ENCODE measurements at regions of chr1 and their contacts with region 1.

Region 1: DNA sequence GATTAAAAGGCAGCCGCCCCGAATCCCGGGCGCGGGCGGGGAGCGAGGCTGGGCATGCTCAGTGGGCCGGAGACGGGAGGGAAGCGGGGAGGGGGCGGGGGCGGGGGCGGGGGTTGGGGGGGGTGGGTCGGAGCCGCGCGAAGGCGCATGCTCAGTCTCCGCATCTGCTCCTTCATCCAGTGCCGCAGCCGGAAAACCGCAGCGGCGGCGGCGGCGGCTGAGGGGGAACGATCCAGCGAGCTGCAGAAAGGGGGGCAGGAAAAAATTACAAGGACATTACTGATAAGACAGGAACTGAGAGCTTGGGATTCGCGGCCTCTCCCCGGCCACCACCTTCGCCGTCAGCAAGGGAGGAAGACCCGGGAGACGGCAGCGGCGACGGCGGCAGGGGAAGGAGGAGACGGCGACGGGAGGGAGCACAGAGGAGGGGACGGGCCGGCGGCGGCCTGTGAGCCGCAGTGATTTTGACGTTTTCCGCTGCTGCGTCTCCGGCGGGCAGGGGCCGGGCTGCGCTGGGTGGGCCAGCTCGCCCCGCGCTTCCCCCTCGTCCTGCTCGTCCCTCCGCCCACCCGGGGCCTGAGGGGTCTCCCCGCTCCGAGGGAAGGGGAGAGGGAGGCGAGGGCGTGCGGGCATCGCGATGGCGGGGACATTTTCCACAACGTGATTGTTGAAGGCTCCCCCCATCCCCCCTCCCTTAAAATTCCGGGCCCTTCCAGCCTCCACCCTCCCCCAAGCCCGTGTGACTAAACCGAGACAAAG is at the start of gene CAMSAP2:
- DNase-seq: peak; percentile 86
- ATAC-seq: peak; percentile 83
- H3K4me3 ChIP-seq: peak within 1 kb of the TSS; percentile 96
- H3K27ac ChIP-seq: peak within 1 kb of the TSS; percentile 100
- H3K4me1 ChIP-seq: no peaks in the 10 kb centered on the region; the same call in 1 of the 2 replicates
- H3K27me3 ChIP-seq: no peaks in the 10 kb centered on the region
- CTCF ChIP-seq: no peak
- POLR2A ChIP-seq: peak; percentile 79
- RAD21 ChIP-seq: no peak
- total RNA-seq, gene CAMSAP2: 29.4 and 43.0 TPM in 2 replicates

Region 2: GRCh38 chr1:200669314-200670241 is 69.3 kb before region 1 on chr1 and contains the start of gene DDX59:
- CTCF ChIA-PET with region 1: no interaction called
- POLR2A ChIA-PET with region 1: interaction called, 11 read pairs
- dilution Hi-C with region 1: no loop called
- in situ Hi-C with region 1: no loop called
- intact Hi-C with region 1: loop called (anchors 1 kb)
- DNase-seq: peak; percentile 96
- ATAC-seq: peak; percentile 91
- H3K4me3 ChIP-seq: peak within 1 kb of the TSS; percentile 76
- H3K27ac ChIP-seq: peak within 1 kb of the TSS; percentile 87
- H3K4me1 ChIP-seq: peaks cover 3% of the 10 kb centered on the region; the same call in 1 of the 2 replicates
- H3K27me3 ChIP-seq: no peaks in the 10 kb centered on the region
- CTCF ChIP-seq: no peak
- POLR2A ChIP-seq: peak; percentile 97
- RAD21 ChIP-seq: no peak; the same call in 1 of the 2 replicates
- total RNA-seq, gene DDX59: 9.1 and 11.1 TPM in 2 replicates

Region 3: DNA sequence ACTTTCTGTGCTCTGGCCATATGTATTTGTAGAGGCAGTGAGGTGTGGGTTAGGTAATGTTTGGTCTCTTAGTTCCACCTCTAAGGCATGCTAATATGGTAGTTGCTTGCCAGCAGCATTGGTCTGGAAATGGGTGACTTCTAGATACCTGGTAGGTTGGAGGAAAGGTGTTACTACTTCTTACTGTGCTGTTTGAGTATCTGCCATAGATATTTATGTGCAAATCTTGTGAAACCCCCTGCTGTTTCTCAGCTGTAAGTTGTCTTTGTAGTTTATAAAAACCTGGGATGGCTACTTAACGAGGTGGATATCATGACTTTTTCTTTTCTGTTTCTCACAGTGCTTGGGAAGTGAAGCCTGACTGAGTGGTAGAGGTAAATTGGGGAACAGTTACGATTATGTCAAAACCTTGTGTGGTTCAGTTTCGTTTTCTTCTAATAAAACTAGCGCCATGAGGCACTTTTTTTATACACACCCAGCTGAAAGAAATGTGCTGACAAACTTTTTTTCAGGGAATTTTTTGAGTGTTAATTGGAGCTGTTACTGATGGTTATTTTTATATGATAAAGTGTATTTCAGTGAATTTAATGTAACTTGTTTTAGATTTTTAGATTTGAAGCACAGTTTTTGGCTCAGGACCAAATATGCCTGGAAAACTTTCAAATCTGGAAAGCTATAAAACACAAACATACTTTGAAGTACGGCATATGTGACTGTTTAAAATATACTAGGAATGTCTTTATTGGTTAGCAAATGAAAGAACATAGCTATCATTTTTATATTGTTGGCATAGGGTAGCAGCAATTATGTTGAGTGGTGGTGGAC is 41.8 kb after region 1 on chr1:
- CTCF ChIA-PET with region 1: no interaction called
- POLR2A ChIA-PET with region 1: no interaction called
- dilution Hi-C with region 1: no loop called
- in situ Hi-C with region 1: no loop called
- intact Hi-C with region 1: loop called (anchors 5 kb)
- DNase-seq: peak; percentile 43
- ATAC-seq: peak; percentile 63
- H3K4me3 ChIP-seq: peak overlapping the region; percentile 45; the same call in 1 of the 2 replicates
- H3K27ac ChIP-seq: no peak overlapping the region
- H3K4me1 ChIP-seq: peaks cover 10% of the 10 kb centered on the region
- H3K27me3 ChIP-seq: no peaks in the 10 kb centered on the region
- CTCF ChIP-seq: no peak
- POLR2A ChIP-seq: no peak
- RAD21 ChIP-seq: no peak

Measured in IMR-90 (cell line).